ENCODE measurements at regions of chr22 and their contacts with region 1.

Region 1: DNA sequence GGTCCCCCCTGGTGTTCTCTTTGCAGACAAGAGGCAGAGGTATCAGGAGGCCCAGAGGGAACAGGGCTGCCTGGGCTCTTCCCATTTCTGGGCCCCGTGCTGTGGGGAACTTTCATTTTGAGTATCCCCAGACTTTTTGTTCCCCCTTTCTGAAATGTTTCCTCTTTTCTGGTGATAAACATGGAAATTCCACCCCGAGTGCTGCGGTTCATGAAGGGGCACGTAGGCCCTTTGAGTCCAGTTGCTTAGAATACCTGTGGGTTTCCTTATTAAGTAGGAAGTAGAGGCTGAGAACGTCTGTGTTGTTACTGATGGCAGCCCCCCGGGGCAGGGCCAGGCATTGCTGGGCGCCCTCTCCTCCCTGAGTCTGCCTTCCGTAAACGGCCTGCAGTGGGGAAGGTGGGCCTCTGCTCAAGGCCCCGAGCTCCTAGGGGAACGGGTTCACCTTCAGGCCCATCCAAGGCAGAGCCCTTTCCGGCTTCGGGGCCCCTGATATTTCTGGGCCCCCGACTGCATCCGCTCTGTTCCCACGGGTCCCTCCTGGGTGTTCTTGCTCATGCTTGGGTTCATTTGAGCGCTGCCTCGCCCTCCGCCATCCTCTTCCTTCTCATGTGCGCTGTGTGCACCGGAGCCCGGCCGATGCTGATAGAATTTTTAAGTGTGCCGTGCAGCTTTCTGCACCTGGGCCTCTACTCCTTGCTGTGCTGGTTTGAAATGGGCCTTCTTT is 12.0 kb downstream of the TBC1D22A start:
- DNase-seq: peak; percentile 66
- ATAC-seq: peak; percentile 64
- H3K4me3 Mint-ChIP-seq: peak overlapping the region; percentile 72
- H3K27ac Mint-ChIP-seq: peak overlapping the region; percentile 89
- H3K4me1 Mint-ChIP-seq: peaks cover 93% of the 10 kb centered on the region
- H3K27me3 Mint-ChIP-seq: no peaks in the 10 kb centered on the region
- CTCF ChIP-seq: no peak

Region 2: GRCh38 chr22:46791201-46791731 is 16.9 kb after region 1 on chr22:
- CTCF ChIA-PET with region 1: interaction called, 4 read pairs
- POLR2A ChIA-PET with region 1: interaction called, 21 read pairs
- intact Hi-C with region 1: loop called (anchors 1 kb)
- DNase-seq: no peak
- ATAC-seq: peak; percentile 95
- H3K4me3 Mint-ChIP-seq: peak overlapping the region; percentile 78
- H3K27ac Mint-ChIP-seq: peak overlapping the region; percentile 94
- H3K4me1 Mint-ChIP-seq: peaks cover 57% of the 10 kb centered on the region
- H3K27me3 Mint-ChIP-seq: no peaks in the 10 kb centered on the region
- CTCF ChIP-seq: no peak

Region 3: DNA sequence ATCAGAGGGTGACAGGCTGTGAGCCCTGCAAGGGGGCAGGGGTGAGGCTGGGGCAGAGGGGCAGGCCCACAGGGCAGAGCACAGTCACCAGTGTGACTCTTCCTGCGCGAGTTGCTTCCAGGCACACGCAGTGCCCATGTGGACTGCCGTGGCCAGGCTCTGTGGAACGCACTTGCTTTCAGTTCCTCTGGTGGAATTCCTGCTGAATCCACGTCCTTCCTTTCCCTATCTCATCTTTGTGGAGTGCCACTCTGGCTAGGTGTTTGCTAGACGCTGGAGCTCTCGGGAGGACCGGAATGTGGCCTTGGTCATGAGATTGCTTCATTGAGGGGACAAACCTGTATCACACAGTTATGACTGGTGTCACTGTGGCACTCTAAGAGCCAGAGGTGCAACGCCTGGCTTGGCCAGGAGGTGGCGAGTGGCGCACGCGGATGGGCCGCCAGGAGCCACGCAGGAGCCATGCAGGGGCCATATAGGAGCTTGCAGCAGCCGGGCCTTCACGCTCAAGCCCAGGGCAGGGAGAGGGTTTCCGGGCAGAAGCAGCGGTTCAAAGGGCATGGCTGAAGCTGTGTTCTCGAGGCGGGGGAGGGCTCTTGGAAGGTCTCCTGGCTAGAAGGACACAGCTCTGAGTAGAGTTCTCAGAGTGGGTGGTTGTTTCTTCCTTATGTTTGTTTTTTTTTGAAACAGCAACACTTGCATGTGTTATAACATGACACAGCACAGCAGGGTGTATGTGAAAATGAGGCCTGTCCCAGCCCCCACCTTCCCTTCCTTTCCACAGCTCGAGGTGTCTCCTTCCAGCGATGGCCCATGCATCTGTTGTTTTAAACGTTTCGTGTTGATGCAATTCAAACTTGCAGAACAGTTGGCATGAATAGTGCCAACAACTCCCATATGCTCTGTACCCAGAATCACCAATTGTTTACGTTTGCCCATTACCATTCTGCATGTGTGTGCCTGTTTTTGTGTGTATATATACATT is 24.2 kb after region 1 on chr22:
- CTCF ChIA-PET with region 1: interaction called, 20 read pairs
- POLR2A ChIA-PET with region 1: interaction called, 6 read pairs
- intact Hi-C with region 1: loop called (anchors 1 kb)
- DNase-seq: peak; percentile 69
- ATAC-seq: peak; percentile 90
- H3K4me3 Mint-ChIP-seq: no peak overlapping the region
- H3K27ac Mint-ChIP-seq: peak overlapping the region; percentile 18
- H3K4me1 Mint-ChIP-seq: peaks cover 36% of the 10 kb centered on the region
- H3K27me3 Mint-ChIP-seq: no peaks in the 10 kb centered on the region
- CTCF ChIP-seq: peak; percentile 28

Measured in activated B cell treated with CpG ODN at 0.5 μM for 24 hours (primary cell).